Activated CD4-positive, alpha-beta memory T cell treated with anti-CD3 and anti-CD28 coated beads, Interleukin-2, amount 10 ng/mL, durations not matched to agents 7 days and 5 days (primary cell): ENCODE measurements at regions of chr11 and their contacts with region 1.

Region 1: DNA sequence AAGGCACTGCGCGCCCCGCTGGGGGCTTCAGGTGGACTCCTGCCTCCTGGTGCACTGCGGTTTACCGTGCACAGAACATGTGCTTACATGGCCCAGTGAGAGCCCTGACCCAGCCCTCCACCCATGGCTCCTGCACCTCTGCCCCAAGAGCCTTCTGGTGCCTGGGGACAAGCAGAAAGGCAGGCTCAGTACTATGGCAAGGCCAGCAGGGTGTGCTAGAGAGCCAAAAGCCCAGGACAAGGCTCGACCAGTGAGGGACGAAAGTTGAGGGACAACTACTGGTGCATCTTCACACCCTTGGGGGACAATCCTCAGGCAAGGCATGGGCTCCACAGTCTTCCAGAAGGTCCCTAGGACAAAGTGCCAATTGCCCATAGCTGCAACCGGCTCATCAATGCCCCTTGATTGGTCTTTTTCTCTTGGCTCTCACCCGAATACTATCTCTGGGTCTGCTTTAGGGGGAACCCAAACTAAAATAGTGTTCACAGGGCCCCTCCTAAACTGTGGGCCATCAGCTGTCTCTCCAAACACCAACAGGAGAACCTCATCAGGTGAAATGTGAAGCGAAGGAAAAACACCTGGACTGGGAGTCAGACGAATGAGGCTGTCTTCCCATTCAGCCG is 13.5 kb downstream of the PGA5 start:
- DNase-seq: peak; percentile 73
- H3K4me3 Mint-ChIP-seq: no peak overlapping the region
- H3K27ac Mint-ChIP-seq: no peak overlapping the region
- H3K4me1 Mint-ChIP-seq: no peaks in the 10 kb centered on the region
- H3K27me3 Mint-ChIP-seq: peaks cover 3% of the 10 kb centered on the region

Region 2: GRCh38 chr11:61187505-61188130 is 66.9 kb before region 1 on chr11:
- CTCF ChIA-PET with region 1: no interaction called
- POLR2A ChIA-PET with region 1: no interaction called
- DNase-seq: peak; percentile 80
- H3K4me3 Mint-ChIP-seq: no peak overlapping the region
- H3K27ac Mint-ChIP-seq: no peak overlapping the region
- H3K4me1 Mint-ChIP-seq: peaks cover 4% of the 10 kb centered on the region
- H3K27me3 Mint-ChIP-seq: peaks cover 10% of the 10 kb centered on the region

Region 3: DNA sequence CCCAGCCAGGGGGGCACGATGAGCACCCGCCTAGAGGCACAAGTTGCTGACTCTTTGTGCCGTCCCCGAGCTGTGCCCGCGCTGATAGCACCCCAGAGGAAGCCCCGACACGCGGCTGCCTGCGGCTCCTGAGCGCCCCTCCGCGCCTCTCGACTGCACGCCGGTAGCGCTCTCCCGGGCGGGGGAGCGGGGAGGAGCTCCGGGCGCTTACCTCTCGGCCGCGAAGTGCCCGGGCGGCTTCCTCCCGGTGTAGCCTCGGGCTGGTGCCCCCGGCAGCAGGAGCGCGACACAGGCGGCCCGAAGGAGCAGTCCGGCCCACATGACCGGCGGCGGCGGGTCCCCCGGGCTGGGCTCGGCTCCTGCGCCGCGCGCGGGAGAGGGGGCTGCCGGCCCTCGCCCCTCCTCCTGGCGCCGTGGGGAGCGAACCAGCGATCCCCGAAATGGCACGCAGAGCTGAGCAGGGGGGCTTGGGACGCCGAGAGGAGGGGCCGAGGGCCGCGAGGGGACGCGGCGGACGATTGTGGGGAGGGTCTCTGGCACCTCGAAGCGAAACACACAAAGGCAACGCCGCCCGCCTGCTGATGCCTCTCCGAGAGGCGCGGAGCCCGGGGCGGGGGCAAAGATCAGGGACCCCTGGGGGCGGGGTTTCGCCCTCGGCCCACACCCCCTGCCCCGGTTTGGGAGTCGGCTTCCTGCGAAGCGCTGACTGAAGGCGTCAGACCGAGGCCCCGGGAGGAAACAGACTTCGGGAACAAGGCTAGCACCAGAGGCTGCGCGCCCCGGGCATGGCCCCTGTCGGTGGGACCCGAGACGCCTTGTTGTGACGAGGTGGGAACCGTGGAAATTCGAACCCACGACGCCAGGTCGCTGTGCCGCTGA is 40.4 kb after region 1 on chr11 and contains the start of gene VWCE:
- CTCF ChIA-PET with region 1: interaction called, 33 read pairs
- POLR2A ChIA-PET with region 1: no interaction called
- DNase-seq: peak; percentile 76
- H3K4me3 Mint-ChIP-seq: peak within 1 kb of the TSS; percentile 70
- H3K27ac Mint-ChIP-seq: peak within 1 kb of the TSS; percentile 37
- H3K4me1 Mint-ChIP-seq: peaks cover 36% of the 10 kb centered on the region
- H3K27me3 Mint-ChIP-seq: peaks cover 13% of the 10 kb centered on the region
- total RNA-seq, gene VWCE: 0.98 to 1.7 TPM

Region 4: GRCh38 chr11:61353131-61354067 is 98.9 kb after region 1 on chr11:
- CTCF ChIA-PET with region 1: no interaction called
- POLR2A ChIA-PET with region 1: no interaction called
- DNase-seq: no peak
- H3K4me3 Mint-ChIP-seq: no peak overlapping the region
- H3K27ac Mint-ChIP-seq: no peak overlapping the region
- H3K4me1 Mint-ChIP-seq: peaks cover 4% of the 10 kb centered on the region
- H3K27me3 Mint-ChIP-seq: no peaks in the 10 kb centered on the region

Region 5: GRCh38 chr11:61369372-61370219 is 115.1 kb after region 1 on chr11:
- CTCF ChIA-PET with region 1: no interaction called
- POLR2A ChIA-PET with region 1: no interaction called
- DNase-seq: no peak
- H3K4me3 Mint-ChIP-seq: no peak overlapping the region
- H3K27ac Mint-ChIP-seq: no peak overlapping the region
- H3K4me1 Mint-ChIP-seq: peaks cover 10% of the 10 kb centered on the region
- H3K27me3 Mint-ChIP-seq: no peaks in the 10 kb centered on the region

Region 6: DNA sequence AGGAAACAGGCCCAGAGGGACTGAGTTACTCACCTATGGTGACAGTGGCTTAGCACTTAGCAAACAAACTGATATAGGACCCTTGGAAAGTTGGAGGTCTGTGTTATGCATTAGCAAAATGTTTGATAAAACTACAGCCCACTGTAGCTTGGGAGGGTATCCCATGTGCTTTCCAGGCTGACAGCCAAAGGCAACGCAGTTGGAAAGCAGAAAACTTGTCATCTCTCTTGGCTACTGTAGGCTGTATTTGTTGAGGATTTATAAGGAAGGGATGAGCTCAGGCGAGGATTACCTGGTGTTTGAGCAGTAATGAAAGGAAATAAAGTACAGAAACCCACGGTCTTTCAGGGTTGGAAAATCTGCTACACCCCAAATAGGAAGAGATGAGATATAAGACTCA is 199.2 kb after region 1 on chr11:
- CTCF ChIA-PET with region 1: no interaction called
- POLR2A ChIA-PET with region 1: no interaction called
- DNase-seq: no peak
- H3K4me3 Mint-ChIP-seq: no peak overlapping the region
- H3K27ac Mint-ChIP-seq: no peak overlapping the region
- H3K4me1 Mint-ChIP-seq: no peaks in the 10 kb centered on the region
- H3K27me3 Mint-ChIP-seq: no peaks in the 10 kb centered on the region